ENCODE measurements at regions of chr17 and their contacts with region 1.

Region 1: DNA sequence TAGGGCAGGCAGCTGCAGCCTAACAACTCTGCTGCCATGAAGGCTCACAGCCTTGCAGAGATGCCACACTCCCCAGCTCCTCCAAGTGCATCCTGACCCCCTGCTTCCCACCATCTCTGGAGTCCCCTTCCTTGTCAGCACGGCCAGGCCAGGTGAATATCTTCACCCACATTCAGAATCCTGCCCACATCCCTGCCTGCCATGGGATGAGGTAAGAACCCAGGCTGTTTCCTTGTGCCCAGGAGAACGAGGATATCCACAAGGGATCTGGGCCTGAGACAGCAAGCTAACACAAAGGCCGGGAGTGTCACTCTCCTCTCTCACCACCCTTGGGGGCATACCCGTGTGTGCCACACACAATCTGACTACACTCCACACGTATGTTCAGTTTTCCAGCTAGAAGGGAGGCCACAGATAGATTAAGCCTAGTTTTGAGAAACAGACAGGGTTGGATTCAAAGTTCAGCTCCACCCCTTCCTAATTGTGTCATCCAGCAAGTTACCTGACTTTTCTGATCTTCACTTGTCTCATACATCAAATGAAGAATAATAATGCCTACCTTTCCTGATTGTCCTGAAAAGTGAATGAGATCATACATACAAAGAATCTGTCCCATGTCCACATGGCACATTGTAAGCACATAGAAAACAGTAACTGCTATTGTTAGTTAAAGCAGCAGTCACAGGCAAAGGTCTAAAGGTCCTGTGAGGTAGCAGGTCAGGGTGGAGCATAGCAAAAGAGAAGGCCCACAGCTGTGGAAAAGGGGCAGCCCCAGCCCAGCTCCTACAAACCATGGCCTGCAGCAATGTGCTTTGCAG is 17.4 kb upstream of the SUPT4H1 start:
- DNase-seq: peak; percentile 97
- ATAC-seq: peak; percentile 93
- H3K4me3 ChIP-seq: peak overlapping the region in 2 of 3 experiments; percentile 1 to 47; a peak in 3 of 6 replicates
- H3K27ac ChIP-seq: peak overlapping the region; percentile 92
- H3K4me1 ChIP-seq: peaks cover 97% of the 10 kb centered on the region
- H3K27me3 ChIP-seq: no peaks in the 10 kb centered on the region
- CTCF ChIP-seq: no peak
- EP300 ChIP-seq: peak in 1 of 2 experiments; percentile 58; a peak in 2 of 4 replicates
- POLR2A ChIP-seq: peak; percentile 12 to 31; a peak in 2 of 4 replicates
- RAD21 ChIP-seq: peak; percentile 35

Region 2: GRCh38 chr17:58277107-58277801 is 92.2 kb before region 1 on chr17:
- CTCF ChIA-PET with region 1: no interaction called
- POLR2A ChIA-PET with region 1: no interaction called
- in situ Hi-C with region 1: no loop called
- intact Hi-C with region 1: no loop called
- DNase-seq: no peak
- ATAC-seq: no peak
- H3K4me3 ChIP-seq: no peak overlapping the region
- H3K27ac ChIP-seq: no peak overlapping the region
- H3K4me1 ChIP-seq: no peaks in the 10 kb centered on the region; the same call in 1 of the 2 replicates
- H3K27me3 ChIP-seq: peaks cover 17 to 76% of the 10 kb centered on the region in 2 experiments; a peak in 4 of 5 replicates
- CTCF ChIP-seq: peak; percentile 45
- EP300 ChIP-seq: no peak
- POLR2A ChIP-seq: no peak
- RAD21 ChIP-seq: no peak

Region 3: GRCh38 chr17:58344047-58344790 is 25.2 kb before region 1 on chr17:
- CTCF ChIA-PET with region 1: no interaction called
- POLR2A ChIA-PET with region 1: interaction called, 252 read pairs
- in situ Hi-C with region 1: no loop called
- intact Hi-C with region 1: no loop called
- DNase-seq: no peak
- ATAC-seq: peak; percentile 10
- H3K4me3 ChIP-seq: no peak overlapping the region
- H3K27ac ChIP-seq: no peak overlapping the region
- H3K4me1 ChIP-seq: peaks cover 5% of the 10 kb centered on the region
- H3K27me3 ChIP-seq: no peaks in the 10 kb centered on the region
- CTCF ChIP-seq: no peak
- EP300 ChIP-seq: no peak
- POLR2A ChIP-seq: peak; percentile 18 to 39; a peak in 3 of 4 replicates
- RAD21 ChIP-seq: no peak

Region 4: GRCh38 chr17:58391302-58391984 is 22.0 kb after region 1 on chr17:
- CTCF ChIA-PET with region 1: no interaction called
- POLR2A ChIA-PET with region 1: interaction called, 58 read pairs
- in situ Hi-C with region 1: no loop called
- intact Hi-C with region 1: loop called (anchors 1 kb)
- DNase-seq: peak; percentile 100
- ATAC-seq: peak; percentile 96
- H3K4me3 ChIP-seq: peak overlapping the region in 2 of 3 experiments; percentile 8 to 36; a peak in 1 of 6 replicates
- H3K27ac ChIP-seq: peak overlapping the region; percentile 93
- H3K4me1 ChIP-seq: peaks cover 97% of the 10 kb centered on the region
- H3K27me3 ChIP-seq: no peaks in the 10 kb centered on the region
- CTCF ChIP-seq: peak; percentile 24; the same call in 1 of the 2 replicates
- EP300 ChIP-seq: peak; percentile 99 to 100
- POLR2A ChIP-seq: peak; percentile 86 to 95
- RAD21 ChIP-seq: peak; percentile 66; the same call in 1 of the 2 replicates

Measured in HepG2 (cell line).